Posterior vena cava (tissue), 2 donors: ENCODE measurements at regions of chr20 and their contacts with region 1.

Region 1: DNA sequence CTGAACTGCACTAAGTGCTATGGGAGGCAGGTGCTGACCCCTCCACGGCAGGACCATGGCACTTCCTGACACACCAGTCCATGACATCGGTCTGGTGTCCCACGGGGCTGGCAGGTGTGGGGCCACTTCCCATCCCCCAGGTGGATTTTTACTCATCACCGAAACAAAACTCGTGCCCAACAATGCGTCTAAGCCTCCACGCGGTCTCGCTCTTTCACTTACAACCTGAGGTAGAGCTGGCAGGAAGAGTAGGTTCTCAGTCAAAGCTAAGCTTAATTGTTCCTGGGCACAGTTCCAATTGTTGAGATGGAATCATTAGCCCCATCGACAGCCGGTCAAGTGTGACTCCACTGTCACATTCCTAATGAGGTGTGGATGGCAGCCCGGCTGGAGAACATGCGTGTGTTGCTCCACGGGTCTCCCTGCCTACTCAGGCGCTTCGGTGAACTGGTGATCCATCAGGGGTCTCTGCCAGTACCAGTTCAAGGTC is 125.7 kb downstream of the SLC23A2 start:
- DNase-seq: no peak

Region 2: DNA sequence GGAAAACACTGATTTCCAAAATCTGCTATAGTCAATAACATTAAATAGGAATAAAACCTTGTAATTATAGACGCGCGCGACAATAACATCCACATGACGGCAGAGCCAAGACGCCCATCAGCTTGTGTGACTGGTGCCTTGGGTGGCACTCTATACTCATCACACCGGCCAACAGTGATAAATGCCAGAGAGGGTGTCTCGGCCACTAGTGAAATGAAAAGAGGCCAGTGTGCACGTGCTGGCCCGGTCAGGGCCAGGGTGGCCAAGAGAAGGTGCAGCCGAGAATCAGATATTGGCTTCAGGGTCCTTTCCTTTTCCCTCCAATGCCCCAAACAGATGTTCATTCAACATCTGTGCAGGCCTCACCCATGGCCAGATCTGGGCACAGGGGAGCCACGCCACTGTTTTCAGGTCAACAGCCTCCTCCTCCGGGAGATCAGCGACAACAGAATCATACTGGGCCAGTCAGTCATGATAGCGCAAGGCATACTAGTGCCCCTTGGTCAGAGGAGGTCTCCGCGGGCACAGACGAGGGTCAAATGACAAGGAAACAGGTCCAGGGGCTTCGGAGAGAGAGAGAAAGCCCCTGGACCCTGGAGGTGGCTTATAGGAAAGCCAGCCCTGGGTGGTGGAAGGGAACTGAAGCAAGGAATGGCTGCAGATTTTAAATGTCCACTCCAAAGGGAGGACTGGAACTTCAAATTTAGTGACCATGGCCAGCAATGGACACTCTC is 19.4 kb before region 1 on chr20:
- intact Hi-C with region 1: loop called in 1 of 2 experiments (anchors 1 kb)
- DNase-seq: no peak

Region 3: GRCh38 chr20:5135363-5136012 is 259.9 kb after region 1 on chr20:
- intact Hi-C with region 1: no loop called
- DNase-seq: no peak